ENCODE measurements at regions of chr12 and their contacts with region 1.

Region 1: GRCh38 chr12:111322336-111323250 is 46.3 kb downstream of the PHETA1 start:
- DNase-seq: no peak
- H3K4me3 ChIP-seq: no peak overlapping the region
- H3K27ac ChIP-seq: no peak overlapping the region
- H3K4me1 ChIP-seq: no peaks in the 10 kb centered on the region
- H3K27me3 ChIP-seq: no peaks in the 10 kb centered on the region
- CTCF ChIP-seq: no peak
- EP300 ChIP-seq: no peak
- POLR2A ChIP-seq: no peak
- RAD21 ChIP-seq: no peak

Region 2: DNA sequence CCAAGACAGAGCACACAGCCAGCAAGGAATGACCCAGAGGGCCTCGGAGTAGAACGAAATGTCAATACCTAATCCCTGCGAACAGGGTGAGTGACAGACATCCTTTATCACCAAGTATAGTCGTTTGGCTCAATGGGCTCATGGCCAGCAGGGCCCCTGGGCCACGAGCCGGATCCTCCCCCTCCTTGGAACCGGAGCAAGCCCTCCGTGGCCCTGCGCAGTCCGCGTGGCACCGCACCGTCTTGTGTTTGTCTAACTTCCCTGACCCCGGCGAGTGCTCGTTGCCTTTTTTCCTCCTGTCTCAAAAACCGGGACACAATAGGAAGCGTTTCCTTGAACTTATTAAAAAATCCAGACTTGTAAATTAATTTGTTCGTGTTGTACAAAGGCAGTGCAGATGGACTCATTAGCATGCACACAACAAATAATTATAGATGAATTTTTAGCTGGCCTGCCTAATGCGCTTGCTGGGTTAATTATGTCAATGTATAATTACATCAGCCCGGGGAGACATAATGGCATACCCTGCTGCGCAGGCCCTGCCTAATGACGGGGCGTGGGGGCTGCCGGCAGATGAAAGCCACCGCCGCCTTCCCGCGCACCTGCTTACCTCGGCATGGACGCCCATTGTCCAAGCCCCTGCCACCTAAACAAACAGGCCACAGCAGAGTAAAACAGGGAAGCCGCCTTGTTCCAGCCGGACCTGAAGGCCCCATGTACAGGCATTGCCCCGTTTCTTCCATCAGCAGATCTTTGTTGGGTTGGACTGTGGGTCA is 35.3 kb before region 1 on chr12:
- CTCF ChIA-PET with region 1: no interaction called
- POLR2A ChIA-PET with region 1: no interaction called
- DNase-seq: no peak
- H3K4me3 ChIP-seq: no peak overlapping the region
- H3K27ac ChIP-seq: no peak overlapping the region
- H3K4me1 ChIP-seq: peaks cover 8 to 9% (median 8%) of the 10 kb centered on the region in 4 experiments
- H3K27me3 ChIP-seq: no peaks in the 10 kb centered on the region
- CTCF ChIP-seq: no peak
- EP300 ChIP-seq: no peak
- POLR2A ChIP-seq: no peak
- RAD21 ChIP-seq: no peak

Region 3: DNA sequence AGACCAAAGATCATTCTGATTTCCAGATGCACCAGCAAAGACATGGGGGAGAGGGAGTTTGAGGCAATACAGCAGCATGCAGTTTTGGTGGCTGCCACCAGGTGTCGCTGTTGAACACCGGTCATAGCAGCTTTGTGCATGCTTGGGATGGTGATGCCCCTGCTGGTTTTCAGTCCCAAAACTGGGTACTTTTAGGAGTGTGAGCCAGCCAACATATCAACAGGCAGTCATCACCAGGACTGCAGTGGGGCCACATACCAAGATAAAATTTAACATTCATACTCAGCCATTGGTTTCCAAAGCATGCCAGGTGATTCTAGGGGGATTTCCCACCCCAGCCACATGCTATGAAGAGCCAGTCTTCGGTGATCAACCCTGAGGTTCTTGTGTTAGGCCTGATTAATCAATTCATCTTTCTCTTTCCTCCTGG is 17.9 kb before region 1 on chr12:
- CTCF ChIA-PET with region 1: interaction called, 13 read pairs
- POLR2A ChIA-PET with region 1: interaction called, 4 read pairs
- DNase-seq: peak; percentile 61 to 92
- H3K4me3 ChIP-seq: no peak overlapping the region
- H3K27ac ChIP-seq: no peak overlapping the region
- H3K4me1 ChIP-seq: no peaks in the 10 kb centered on the region
- H3K27me3 ChIP-seq: no peaks in the 10 kb centered on the region
- CTCF ChIP-seq: peak; percentile 89 to 99 (median 98)
- EP300 ChIP-seq: no peak
- POLR2A ChIP-seq: no peak
- RAD21 ChIP-seq: peak; percentile 44 to 50

Region 4: DNA sequence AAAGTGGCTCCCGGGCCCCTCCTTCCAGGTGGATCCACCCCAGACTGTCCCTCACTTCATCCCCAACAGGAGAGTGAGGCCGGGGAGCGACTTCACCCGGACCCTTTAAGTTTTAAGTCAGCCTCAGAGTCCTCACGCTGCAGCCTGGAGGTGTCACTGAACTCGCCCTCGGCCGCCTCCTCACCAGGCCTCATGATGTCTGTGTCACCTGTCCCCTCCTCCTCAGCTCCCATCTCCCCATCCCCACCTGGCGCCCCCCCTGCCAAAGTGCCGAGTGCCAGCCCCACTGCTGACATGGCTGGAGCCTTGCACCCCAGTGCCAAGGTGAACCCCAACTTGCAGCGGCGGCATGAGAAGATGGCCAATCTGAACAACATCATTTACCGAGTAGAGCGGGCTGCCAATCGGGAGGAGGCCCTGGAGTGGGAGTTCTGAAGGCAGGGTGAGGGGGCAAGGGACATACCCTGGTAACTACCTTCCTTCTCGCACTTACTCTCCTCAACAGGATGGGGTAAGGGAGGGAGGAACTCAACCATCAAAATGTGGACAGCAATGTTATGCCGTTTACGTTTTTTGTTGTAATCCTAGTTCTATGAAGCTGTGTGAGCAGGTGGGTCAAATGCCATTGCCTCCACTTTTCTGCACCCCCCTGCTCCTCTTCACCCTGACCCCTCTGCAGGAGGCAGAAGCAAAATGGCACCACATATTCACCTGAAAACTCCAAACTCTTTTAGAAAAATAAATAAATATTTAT is 25.5 kb after region 1 on chr12:
- CTCF ChIA-PET with region 1: no interaction called
- POLR2A ChIA-PET with region 1: no interaction called
- DNase-seq: no peak
- H3K4me3 ChIP-seq: no peak overlapping the region
- H3K27ac ChIP-seq: no peak overlapping the region
- H3K4me1 ChIP-seq: no peaks in the 10 kb centered on the region
- H3K27me3 ChIP-seq: no peaks in the 10 kb centered on the region; a peak in 1 of 7 replicates
- CTCF ChIP-seq: no peak
- EP300 ChIP-seq: no peak
- POLR2A ChIP-seq: no peak
- RAD21 ChIP-seq: no peak